Activated naive CD4-positive, alpha-beta T cell treated with anti-CD3 and anti-CD28 coated beads for 36 hours (primary cell): ENCODE measurements at regions of chr5 and their contacts with region 1.

Region 1: DNA sequence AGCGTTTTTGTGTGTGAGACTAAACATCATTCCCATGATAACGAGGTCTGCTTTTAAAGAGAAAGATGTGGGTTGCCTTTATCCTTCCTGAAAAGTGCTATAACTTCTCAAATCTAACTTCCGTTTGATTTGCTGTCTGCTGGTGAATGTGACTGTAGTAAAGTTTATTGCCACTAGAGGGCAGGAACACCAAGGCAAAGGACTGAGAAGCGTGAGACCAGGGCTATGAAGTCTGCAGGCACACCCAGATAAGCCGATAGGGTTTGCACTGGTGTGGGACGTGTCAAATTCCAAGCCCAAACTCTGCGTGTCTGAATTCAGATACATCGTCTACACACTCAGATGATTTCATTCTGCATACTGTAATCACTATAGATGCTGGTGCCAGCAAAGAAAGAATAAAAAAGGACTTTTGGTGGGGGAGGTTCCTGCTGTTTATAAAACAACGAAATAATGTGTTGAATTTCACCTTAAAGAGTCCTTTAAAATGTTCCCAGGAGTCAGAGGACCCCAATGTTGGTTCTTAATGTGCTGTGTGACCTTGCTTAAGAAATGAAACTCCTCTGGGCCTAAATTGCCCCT is 87.2 kb downstream of the PTTG1 start:
- DNase-seq: peak; percentile 78
- H3K4me3 Mint-ChIP-seq: no peak overlapping the region
- H3K27ac Mint-ChIP-seq: no peak overlapping the region
- H3K4me1 Mint-ChIP-seq: peaks cover 30% of the 10 kb centered on the region
- H3K27me3 Mint-ChIP-seq: no peaks in the 10 kb centered on the region

Region 2: GRCh38 chr5:159286420-159287035 is 1222.3 kb before region 1 on chr5:
- CTCF ChIA-PET with region 1: no interaction called
- intact Hi-C with region 1: no loop called
- DNase-seq: no peak
- H3K4me3 Mint-ChIP-seq: no peak overlapping the region
- H3K27ac Mint-ChIP-seq: no peak overlapping the region
- H3K4me1 Mint-ChIP-seq: no peaks in the 10 kb centered on the region
- H3K27me3 Mint-ChIP-seq: no peaks in the 10 kb centered on the region

Region 3: DNA sequence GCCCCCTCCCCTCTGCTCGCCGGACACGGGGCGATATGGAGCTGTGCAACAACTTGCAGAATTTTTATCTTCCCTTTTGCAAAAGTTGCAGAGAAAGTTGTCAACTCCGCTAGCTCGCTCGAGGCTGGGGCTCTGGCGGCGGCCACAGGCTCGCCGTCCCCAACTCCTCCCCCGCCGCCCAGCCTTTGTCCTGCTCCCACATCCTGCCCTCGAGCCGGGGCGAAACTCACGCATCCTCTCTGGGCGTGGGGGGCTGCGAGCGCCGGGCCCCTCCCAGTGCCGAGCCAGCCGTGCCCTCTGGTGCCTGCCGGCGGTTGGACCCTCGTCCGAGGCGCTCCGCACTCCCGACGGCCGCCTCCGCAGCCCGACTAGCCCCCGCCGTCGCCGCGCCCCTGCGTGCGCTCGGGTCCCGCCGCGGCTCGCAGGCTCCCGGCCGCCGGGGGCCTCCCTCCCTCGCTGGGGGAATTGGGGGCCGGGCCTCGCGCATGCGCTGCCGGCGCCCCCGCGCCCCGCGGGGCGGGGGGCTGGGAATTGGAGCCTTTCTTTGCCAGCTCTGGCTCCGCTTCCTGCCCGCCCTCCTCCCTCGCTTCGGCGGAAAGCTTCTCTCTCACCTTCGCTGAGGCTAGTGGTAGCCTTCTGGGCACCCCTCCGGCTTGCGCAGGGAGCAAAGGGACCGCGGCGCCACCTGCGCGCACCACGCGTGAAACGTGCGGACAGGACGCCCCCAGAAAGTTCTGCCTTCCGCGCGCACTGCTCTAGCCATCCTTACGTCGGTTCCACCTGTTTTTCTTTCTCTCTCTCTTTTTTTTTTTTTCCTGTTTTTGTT is 196.5 kb before region 1 on chr5 and contains the start of gene CCNJL:
- CTCF ChIA-PET with region 1: no interaction called
- intact Hi-C with region 1: no loop called
- DNase-seq: no peak
- H3K4me3 Mint-ChIP-seq: peak within 1 kb of the TSS; percentile 62
- H3K27ac Mint-ChIP-seq: no peak within 1 kb of the TSS
- H3K4me1 Mint-ChIP-seq: peaks cover 7% of the 10 kb centered on the region
- H3K27me3 Mint-ChIP-seq: peaks cover 47% of the 10 kb centered on the region
- total RNA-seq, gene CCNJL: not detected

Region 4: DNA sequence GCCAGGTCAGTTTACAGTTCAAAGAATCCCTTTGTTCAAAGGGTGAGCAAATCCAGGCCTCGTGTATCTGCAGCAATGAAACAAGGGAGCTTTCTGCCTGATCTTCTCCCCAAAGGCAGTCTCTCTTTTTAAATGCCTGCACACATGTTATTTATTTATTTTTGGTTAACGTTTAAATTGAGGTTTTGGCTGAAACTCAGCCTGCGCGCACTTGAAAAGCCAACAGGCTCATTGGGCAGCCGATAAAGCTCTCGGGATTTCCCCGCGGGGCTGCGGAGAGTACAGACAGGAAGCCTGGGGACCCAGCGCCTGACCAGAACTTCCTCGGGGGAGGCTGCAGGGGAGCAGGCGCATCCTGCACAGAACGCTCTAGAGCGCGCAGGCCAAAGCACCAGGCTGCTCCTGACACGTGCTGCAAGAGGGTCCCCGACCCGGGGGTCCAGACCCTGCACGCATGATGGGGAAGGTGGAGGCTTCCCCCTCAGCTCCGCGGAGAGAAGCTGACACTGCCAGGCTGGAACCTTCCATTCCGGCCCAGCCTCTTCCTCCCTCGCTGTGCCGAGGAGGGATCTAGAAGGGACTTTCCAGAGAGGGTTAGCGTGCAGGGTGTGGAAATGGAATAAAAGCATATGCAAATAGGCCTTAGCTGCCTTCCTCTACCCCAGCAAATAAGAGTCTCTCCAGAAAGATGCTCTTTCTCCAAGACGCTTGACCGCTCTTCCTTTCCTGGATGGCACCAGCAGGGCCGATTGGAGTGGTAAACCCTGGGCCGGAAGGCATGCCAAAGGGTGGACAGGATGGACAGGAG is 41.1 kb before region 1 on chr5:
- CTCF ChIA-PET with region 1: interaction called, 20 read pairs
- intact Hi-C with region 1: loop called (anchors 1 kb)
- DNase-seq: peak; percentile 87
- H3K4me3 Mint-ChIP-seq: peak overlapping the region; percentile 99
- H3K27ac Mint-ChIP-seq: peak overlapping the region; percentile 98
- H3K4me1 Mint-ChIP-seq: peaks cover 72% of the 10 kb centered on the region
- H3K27me3 Mint-ChIP-seq: no peaks in the 10 kb centered on the region

Region 5: DNA sequence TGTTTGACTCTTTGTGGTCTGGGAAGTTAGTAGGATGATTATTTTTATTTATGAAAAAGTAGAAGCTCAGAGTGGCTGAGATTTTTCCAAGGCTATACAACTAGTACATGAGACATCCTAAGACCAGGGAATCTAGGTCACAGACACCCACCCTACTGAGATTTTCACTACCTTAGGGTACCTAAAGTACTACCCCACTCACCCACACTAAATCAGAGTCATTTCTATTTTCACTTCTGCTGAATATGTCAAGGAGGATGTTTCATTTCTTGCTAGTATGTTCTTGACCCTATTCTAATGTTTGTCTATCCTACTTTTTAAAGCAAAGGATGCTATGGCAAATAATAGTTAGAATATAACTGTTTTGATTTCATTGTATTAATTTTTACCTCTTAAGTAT is 137.2 kb after region 1 on chr5:
- CTCF ChIA-PET with region 1: interaction called, 5 read pairs
- intact Hi-C with region 1: loop called (anchors 2 kb)
- DNase-seq: no peak
- H3K4me3 Mint-ChIP-seq: no peak overlapping the region
- H3K27ac Mint-ChIP-seq: no peak overlapping the region
- H3K4me1 Mint-ChIP-seq: no peaks in the 10 kb centered on the region
- H3K27me3 Mint-ChIP-seq: no peaks in the 10 kb centered on the region

Region 6: GRCh38 chr5:160787240-160787639 is 278.4 kb after region 1 on chr5:
- CTCF ChIA-PET with region 1: interaction called, 3 read pairs
- intact Hi-C with region 1: loop called (anchors 1 kb)
- DNase-seq: peak; percentile 17
- H3K4me3 Mint-ChIP-seq: no peak overlapping the region
- H3K27ac Mint-ChIP-seq: no peak overlapping the region
- H3K4me1 Mint-ChIP-seq: no peaks in the 10 kb centered on the region
- H3K27me3 Mint-ChIP-seq: peaks cover 2% of the 10 kb centered on the region

Region 7: GRCh38 chr5:161105525-161105924 is 596.7 kb after region 1 on chr5:
- CTCF ChIA-PET with region 1: no interaction called
- intact Hi-C with region 1: no loop called
- DNase-seq: no peak
- H3K4me3 Mint-ChIP-seq: no peak overlapping the region
- H3K27ac Mint-ChIP-seq: no peak overlapping the region
- H3K4me1 Mint-ChIP-seq: no peaks in the 10 kb centered on the region
- H3K27me3 Mint-ChIP-seq: no peaks in the 10 kb centered on the region

Region 8: GRCh38 chr5:161544350-161544765 is 1035.5 kb after region 1 on chr5:
- CTCF ChIA-PET with region 1: no interaction called
- intact Hi-C with region 1: loop called (anchors 5 kb)
- DNase-seq: peak; percentile 35
- H3K4me3 Mint-ChIP-seq: no peak overlapping the region
- H3K27ac Mint-ChIP-seq: no peak overlapping the region
- H3K4me1 Mint-ChIP-seq: peaks cover 13% of the 10 kb centered on the region
- H3K27me3 Mint-ChIP-seq: peaks cover 49% of the 10 kb centered on the region